ENCODE measurements at regions of chr13 and their contacts with region 1.

Region 1: DNA sequence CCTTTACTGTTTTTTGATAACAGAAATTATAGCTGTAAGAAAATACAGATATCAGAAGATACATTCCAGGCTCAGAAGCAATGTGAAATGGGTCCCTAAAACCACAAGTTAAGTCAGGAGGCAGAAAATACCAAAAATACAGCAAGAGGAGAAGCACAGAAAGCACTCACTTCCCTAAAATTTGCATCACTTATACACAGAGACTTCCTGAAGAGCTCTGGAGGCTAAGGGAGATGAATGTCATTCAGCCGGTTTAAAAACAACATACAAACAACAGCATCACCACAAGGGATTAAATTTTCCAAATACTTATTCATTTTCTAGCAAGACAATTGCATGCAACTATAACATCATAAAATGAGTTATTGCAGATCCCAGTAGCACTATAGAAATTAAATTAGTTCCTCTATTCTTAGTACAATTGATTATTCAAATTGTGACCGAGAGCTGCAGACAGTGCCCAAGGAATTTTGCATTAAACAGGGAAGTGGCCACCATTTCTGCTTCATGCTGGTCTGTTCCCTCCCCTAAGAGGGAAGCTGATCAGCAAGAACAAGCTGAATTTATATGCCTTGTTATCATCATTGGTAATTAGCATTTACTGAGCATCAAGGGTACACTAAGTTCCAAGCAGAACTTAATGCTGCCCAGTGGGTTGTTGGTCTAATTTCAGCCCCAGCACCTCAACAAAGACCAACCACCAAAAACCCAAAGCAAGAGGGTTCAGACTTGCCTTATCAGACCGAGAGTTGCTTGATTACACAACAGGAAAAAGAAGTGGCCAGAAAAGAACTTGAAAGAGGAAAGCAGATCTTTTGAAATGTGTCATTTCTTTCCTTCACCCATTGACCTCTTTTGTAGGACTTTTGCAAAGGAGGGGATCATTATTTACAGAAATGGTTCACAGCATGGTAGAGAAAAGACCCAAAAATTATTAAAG is 140.7 kb downstream of the KCTD12 start:
- DNase-seq: peak; percentile 64 to 78 (median 77)
- H3K4me3 ChIP-seq: peak overlapping the region in 2 of 3 experiments; percentile 33 to 69
- H3K4me3 Mint-ChIP-seq: peak overlapping the region; percentile 49 to 66
- H3K27ac ChIP-seq: peak overlapping the region; percentile 84 to 86
- H3K27ac Mint-ChIP-seq: peak overlapping the region; percentile 85 to 95 (median 91)
- H3K4me1 ChIP-seq: peaks cover 62 to 67% of the 10 kb centered on the region in 2 donors
- H3K4me1 Mint-ChIP-seq: peaks cover 31% of the 10 kb centered on the region
- H3K27me3 ChIP-seq: no peaks in the 10 kb centered on the region
- H3K27me3 Mint-ChIP-seq: no peaks in the 10 kb centered on the region
- CTCF ChIP-seq: no peak

Region 2: GRCh38 chr13:75587679-75588078 is 1157.9 kb before region 1 on chr13:
- intact Hi-C with region 1: no loop called
- DNase-seq: no peak
- H3K4me3 ChIP-seq: no peak overlapping the region
- H3K4me3 Mint-ChIP-seq: no peak overlapping the region
- H3K27ac ChIP-seq: no peak overlapping the region
- H3K27ac Mint-ChIP-seq: no peak overlapping the region
- H3K4me1 ChIP-seq: no peaks in the 10 kb centered on the region
- H3K4me1 Mint-ChIP-seq: peaks cover 4% of the 10 kb centered on the region
- H3K27me3 ChIP-seq: no peaks in the 10 kb centered on the region
- H3K27me3 Mint-ChIP-seq: no peaks in the 10 kb centered on the region
- CTCF ChIP-seq: no peak

Region 3: DNA sequence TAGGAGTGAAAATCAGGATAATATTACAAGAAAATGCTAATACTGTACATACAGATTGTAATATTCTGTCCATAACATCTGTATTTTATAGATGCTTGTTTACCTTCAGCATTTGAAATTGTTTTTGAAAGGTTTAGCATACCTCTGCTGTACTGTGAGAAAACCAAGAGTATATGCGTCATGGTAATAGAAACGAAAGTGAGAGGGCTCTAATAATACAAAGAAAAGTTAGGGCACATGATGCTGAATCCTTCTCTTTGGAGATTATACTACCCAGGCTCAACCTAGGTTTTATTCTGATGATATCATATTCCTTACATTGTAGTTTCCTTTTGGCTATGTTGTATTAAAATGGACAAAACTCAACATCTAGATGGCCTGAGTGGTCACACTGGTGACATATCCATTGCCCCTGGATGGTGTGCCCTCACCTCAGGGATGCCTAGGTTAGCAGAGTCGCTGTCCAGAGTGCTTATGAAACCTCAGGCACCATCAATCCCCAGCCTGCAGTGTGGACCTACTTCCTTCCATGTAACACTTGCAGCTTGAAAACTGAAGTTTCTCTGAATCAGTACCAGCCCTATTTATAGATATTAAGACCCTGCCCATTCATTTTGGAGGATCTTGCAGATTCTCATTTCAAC is 113.0 kb before region 1 on chr13:
- intact Hi-C with region 1: no loop called
- DNase-seq: no peak
- H3K4me3 ChIP-seq: no peak overlapping the region
- H3K4me3 Mint-ChIP-seq: no peak overlapping the region
- H3K27ac ChIP-seq: no peak overlapping the region
- H3K27ac Mint-ChIP-seq: no peak overlapping the region
- H3K4me1 ChIP-seq: no peaks in the 10 kb centered on the region
- H3K4me1 Mint-ChIP-seq: no peaks in the 10 kb centered on the region
- H3K27me3 ChIP-seq: no peaks in the 10 kb centered on the region
- H3K27me3 Mint-ChIP-seq: peaks cover 0 to 3% (median 0%) of the 10 kb centered on the region in 3 donors
- CTCF ChIP-seq: no peak

Region 4: GRCh38 chr13:76667551-76667950 is 78.0 kb before region 1 on chr13:
- intact Hi-C with region 1: loop called in 1 of 2 experiments (anchors 5 kb)
- DNase-seq: peak; percentile 41 to 70 (median 52)
- H3K4me3 ChIP-seq: no peak overlapping the region
- H3K4me3 Mint-ChIP-seq: no peak overlapping the region
- H3K27ac ChIP-seq: no peak overlapping the region
- H3K27ac Mint-ChIP-seq: peak overlapping the region in 3 of 7 donors; percentile 24 to 41 (median 25)
- H3K4me1 ChIP-seq: peaks cover 20 to 28% of the 10 kb centered on the region in 2 donors
- H3K4me1 Mint-ChIP-seq: peaks cover 42% of the 10 kb centered on the region
- H3K27me3 ChIP-seq: no peaks in the 10 kb centered on the region
- H3K27me3 Mint-ChIP-seq: peaks cover 0 to under 1% (median 0%) of the 10 kb centered on the region in 3 donors
- CTCF ChIP-seq: peak; percentile 52

Region 5: DNA sequence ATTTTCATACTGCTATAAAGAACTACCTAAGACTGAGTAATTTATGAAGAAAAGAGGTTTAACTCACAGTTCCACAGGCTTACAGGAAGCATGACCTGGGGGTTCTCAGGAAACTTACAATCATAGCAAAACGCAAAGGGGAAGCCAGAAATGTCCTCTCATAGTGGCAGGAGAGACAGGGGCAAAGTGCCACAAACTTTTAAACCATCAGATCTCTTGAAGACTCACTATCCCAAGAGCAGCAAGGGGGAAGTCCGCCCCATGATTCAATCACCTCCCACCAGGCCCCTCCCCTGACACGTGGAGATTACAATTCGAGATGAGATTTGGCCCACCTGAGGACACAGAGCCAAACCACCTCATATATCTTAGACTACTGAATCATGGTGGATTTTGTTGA is 58.1 kb before region 1 on chr13:
- intact Hi-C with region 1: no loop called
- DNase-seq: peak; percentile 21 to 42 (median 25)
- H3K4me3 ChIP-seq: no peak overlapping the region
- H3K4me3 Mint-ChIP-seq: peak overlapping the region in 1 of 2 donors; percentile 7
- H3K27ac ChIP-seq: peak overlapping the region in 1 of 2 donors; percentile 50
- H3K27ac Mint-ChIP-seq: peak overlapping the region in 4 of 7 donors; percentile 51 to 69 (median 58)
- H3K4me1 ChIP-seq: peaks cover 12% of the 10 kb centered on the region in 2 donors
- H3K4me1 Mint-ChIP-seq: peaks cover 16% of the 10 kb centered on the region
- H3K27me3 ChIP-seq: no peaks in the 10 kb centered on the region
- H3K27me3 Mint-ChIP-seq: no peaks in the 10 kb centered on the region
- CTCF ChIP-seq: no peak

Region 6: DNA sequence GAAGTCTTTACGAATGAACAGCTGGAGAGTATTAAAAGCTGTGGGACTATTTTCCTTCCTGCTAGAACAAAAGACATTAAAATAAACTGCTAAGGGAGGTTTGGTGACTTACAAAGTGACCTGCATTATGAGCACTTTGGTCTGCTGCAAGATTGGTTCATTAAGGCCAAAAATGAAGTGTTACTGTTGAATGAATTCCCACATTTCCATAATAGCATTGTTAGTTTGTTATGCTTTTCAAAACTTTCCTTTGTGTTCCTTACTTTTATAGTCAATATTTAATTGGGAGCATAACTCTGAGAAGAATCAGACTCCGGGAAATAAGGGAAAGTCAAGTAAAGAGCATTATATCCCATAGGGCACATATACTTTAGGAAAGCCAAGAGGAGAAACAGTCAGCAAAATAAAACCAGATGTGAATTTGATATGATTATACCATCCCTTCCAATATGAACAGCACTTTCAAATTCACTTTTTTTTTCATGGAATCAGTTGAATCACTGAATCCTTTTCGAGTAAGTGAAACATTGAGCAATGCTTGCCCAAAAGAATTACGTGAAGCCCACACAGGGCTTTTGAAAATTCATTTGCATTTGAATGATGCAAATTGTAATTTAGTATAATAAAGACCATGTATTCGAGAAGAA is 28.0 kb after region 1 on chr13:
- intact Hi-C with region 1: no loop called
- DNase-seq: no peak
- H3K4me3 ChIP-seq: no peak overlapping the region
- H3K4me3 Mint-ChIP-seq: no peak overlapping the region
- H3K27ac ChIP-seq: no peak overlapping the region
- H3K27ac Mint-ChIP-seq: no peak overlapping the region
- H3K4me1 ChIP-seq: peaks cover 6 to 9% of the 10 kb centered on the region in 2 donors
- H3K4me1 Mint-ChIP-seq: peaks cover 28% of the 10 kb centered on the region
- H3K27me3 ChIP-seq: no peaks in the 10 kb centered on the region
- H3K27me3 Mint-ChIP-seq: no peaks in the 10 kb centered on the region
- CTCF ChIP-seq: no peak

Region 7: GRCh38 chr13:76792731-76793347 is 47.3 kb after region 1 on chr13:
- intact Hi-C with region 1: loop called (anchors 5 to 10 kb)
- DNase-seq: peak in 2 of 3 donors; percentile 20 to 69
- H3K4me3 ChIP-seq: no peak overlapping the region
- H3K4me3 Mint-ChIP-seq: peak overlapping the region in 1 of 2 donors; percentile 17
- H3K27ac ChIP-seq: no peak overlapping the region
- H3K27ac Mint-ChIP-seq: peak overlapping the region in 5 of 7 donors; percentile 15 to 58 (median 15)
- H3K4me1 ChIP-seq: peaks cover 14 to 27% of the 10 kb centered on the region in 2 donors
- H3K4me1 Mint-ChIP-seq: peaks cover 23% of the 10 kb centered on the region
- H3K27me3 ChIP-seq: no peaks in the 10 kb centered on the region
- H3K27me3 Mint-ChIP-seq: peaks cover 0 to 2% (median 0%) of the 10 kb centered on the region in 3 donors
- CTCF ChIP-seq: no peak

Region 8: GRCh38 chr13:76799696-76800095 is 54.2 kb after region 1 on chr13:
- intact Hi-C with region 1: loop called (anchors 5 to 10 kb)
- DNase-seq: peak; percentile 66 to 81 (median 71)
- H3K4me3 ChIP-seq: no peak overlapping the region
- H3K4me3 Mint-ChIP-seq: no peak overlapping the region
- H3K27ac ChIP-seq: peak overlapping the region; percentile 42 to 60
- H3K27ac Mint-ChIP-seq: peak overlapping the region; percentile 82 to 95 (median 91)
- H3K4me1 ChIP-seq: peaks cover 49 to 52% of the 10 kb centered on the region in 2 donors
- H3K4me1 Mint-ChIP-seq: peaks cover 46% of the 10 kb centered on the region
- H3K27me3 ChIP-seq: no peaks in the 10 kb centered on the region
- H3K27me3 Mint-ChIP-seq: no peaks in the 10 kb centered on the region
- CTCF ChIP-seq: no peak